Activated T-helper 1 cell treated with anti-CD3 and anti-CD28 coated beads, Interleukin-12 subunit alpha, Interleukin-12 subunit beta, Interleukin-2, Interleukin-4 antibody, amounts not matched to agents 30 ng/mL and 10 ng/mL and 1 ng/mL, durations not matched to agents 14 hours and 24 hours and 36 hours (primary cell): ENCODE measurements at regions of chr2 and their contacts with region 1.

Region 1: DNA sequence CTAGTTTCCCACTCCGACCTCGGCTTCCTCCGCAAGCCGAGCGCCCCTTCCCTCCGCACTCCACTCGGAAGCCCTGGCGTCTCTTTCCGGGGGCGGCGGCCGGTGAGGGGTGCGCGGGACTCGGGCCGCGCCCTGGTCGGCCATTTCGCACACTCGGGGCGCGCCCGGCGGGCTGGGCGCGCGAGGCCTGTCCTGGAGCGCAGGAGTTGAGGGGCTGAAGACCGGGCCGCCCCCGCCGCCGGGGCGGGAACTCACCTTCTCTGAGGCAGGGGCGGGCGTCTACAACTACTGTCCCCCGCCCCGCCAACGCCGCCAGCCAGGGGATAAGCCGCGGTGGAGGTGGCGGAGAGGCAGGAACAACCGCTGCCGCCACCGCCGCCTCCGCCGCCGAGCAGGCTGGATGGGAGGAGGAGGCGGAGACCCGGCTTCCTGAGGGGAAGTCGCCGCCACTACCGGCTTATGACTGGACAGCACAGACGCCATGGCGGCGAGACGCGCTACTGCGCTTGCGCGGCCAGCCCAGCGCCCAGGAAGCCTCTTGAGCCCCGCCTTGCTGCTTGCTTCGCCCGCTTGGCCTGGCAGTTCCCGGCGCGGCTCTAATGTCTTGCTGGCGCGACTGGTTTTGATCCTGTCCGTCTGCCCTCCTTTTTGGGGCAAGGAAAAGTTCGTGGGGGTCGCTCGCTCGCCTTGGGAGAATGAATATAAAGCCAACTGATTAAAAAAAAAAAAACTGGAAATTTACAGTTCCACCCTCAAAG is at the start of gene KRCC1:
- DNase-seq: peak; percentile 95
- H3K4me3 Mint-ChIP-seq: peak within 1 kb of the TSS; percentile 93
- H3K27ac Mint-ChIP-seq: peak within 1 kb of the TSS; percentile 98
- H3K4me1 Mint-ChIP-seq: peaks cover 62% of the 10 kb centered on the region
- H3K27me3 Mint-ChIP-seq: no peaks in the 10 kb centered on the region
- total RNA-seq, gene KRCC1: 16.9 and 17.9 TPM in 2 replicates

Region 2: DNA sequence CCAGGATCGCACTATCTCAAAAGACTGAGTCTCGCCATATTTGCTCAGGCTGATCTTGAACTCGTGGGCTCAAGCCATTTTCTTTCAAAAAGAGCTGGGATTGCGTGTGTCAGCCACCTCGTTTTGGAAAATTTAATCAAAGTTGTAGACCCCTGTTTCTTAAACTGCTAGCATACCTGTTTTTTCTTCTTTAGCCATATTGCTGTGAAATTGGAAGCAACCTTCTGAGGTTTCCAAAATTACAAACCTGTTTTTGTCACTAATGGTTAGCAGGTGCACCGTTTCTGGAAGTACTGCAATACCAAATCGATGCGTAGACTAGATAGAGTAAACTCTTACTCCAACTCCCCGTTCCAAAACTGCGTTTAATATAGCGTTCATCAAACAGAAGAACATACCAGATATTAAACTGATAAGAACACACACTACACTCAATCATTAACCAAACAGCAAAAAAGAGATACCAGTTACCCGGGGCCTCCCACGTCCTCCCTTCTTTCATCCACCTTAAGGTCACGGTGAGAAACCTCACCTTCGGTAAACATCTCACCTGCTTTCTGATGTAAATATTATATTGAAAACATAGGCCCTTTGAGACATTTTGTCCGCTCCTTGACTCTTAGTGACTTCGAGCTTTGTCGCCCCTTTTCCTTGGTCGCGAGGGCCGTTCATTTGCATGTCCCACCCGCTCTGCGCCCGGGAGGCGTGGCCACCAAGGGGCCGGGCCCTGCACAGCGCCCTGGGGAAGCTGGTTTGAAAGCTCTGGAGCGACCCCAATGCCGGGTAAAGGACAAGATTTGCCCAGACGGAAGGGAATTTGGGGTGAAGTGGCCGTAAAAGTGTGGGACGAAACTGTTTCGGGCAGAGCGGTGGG is 39.2 kb before region 1 on chr2 and contains the start of gene RNU2-63P:
- intact Hi-C with region 1: loop called (anchors 1 kb)
- DNase-seq: peak; percentile 65
- H3K4me3 Mint-ChIP-seq: peak within 1 kb of the TSS; percentile 92
- H3K27ac Mint-ChIP-seq: peak within 1 kb of the TSS; percentile 99
- H3K4me1 Mint-ChIP-seq: peaks cover 21% of the 10 kb centered on the region
- H3K27me3 Mint-ChIP-seq: peaks cover 5% of the 10 kb centered on the region
- total RNA-seq, gene RNU2-63P: 28.5 and 32.9 TPM in 2 replicates

Region 3: DNA sequence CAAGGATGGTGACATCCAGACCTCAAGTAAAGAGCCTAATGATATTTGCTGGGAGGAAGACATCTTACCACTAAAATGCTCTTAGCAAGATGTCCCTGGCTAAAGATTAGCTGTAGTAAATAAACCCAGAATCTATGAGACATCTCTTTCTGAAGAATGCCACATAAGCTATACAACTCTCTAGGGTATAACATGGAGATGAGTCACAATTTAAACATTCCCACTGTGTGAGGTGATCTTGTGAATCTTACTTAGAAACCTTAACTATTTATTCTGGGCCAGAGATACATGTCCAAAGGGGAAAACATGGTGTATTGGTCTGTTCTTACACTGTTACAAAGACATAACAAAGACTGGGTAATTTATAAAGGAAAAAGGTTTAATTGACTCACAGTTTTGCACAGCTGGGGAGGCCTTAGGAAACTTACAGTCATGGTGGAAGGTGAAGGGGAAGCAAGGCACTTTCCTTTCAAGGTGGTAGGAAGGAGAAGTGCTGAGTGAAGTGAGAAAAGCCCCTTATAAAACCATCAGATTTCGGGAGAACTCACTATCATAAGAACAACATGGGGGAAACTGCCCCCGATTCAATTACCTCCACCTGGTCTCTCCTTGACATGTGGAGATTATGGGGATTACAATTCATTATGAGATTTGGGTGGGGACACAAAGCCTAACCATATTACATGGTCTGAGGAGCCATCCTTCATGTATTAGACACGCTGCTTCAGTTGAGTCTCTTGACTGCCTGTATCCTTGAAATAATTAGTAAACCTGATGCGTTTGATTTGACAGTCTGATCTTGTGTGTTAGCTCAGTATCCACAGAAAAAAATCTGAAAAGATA is 17.1 kb before region 1 on chr2:
- intact Hi-C with region 1: loop called (anchors 2 kb)
- DNase-seq: no peak
- H3K4me3 Mint-ChIP-seq: no peak overlapping the region
- H3K27ac Mint-ChIP-seq: peak overlapping the region; percentile 36
- H3K4me1 Mint-ChIP-seq: peaks cover 25% of the 10 kb centered on the region
- H3K27me3 Mint-ChIP-seq: no peaks in the 10 kb centered on the region

Region 4: DNA sequence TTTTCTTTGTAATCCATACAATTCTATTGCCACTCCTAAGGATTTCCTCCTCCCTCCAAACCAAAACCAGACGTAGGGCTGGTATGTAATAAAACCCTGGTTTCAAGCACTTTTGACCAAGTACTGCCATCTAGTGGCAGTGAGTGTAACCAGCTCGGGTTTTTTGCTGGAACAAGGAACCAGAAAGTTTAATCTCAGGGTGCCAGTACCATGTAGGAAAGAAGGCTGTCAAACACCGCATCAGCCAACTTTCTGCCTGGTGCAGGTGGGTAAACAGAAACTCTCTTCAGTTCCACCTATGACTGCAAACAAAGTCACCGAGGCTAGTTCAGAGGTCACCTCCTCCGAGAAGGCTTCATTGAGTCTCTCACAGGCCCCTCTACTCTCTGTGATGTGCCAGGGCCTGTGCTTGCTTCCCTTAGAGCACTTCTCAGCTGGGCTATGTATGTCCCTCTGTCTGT is 104.4 kb after region 1 on chr2:
- intact Hi-C with region 1: loop called (anchors 1 kb)
- DNase-seq: peak; percentile 33
- H3K4me3 Mint-ChIP-seq: no peak overlapping the region
- H3K27ac Mint-ChIP-seq: no peak overlapping the region
- H3K4me1 Mint-ChIP-seq: no peaks in the 10 kb centered on the region
- H3K27me3 Mint-ChIP-seq: peaks cover 3% of the 10 kb centered on the region

Region 5: GRCh38 chr2:88187038-88187676 is 131.6 kb after region 1 on chr2:
- intact Hi-C with region 1: loop called (anchors 1 kb)
- DNase-seq: no peak
- H3K4me3 Mint-ChIP-seq: no peak overlapping the region
- H3K27ac Mint-ChIP-seq: no peak overlapping the region
- H3K4me1 Mint-ChIP-seq: peaks cover 16% of the 10 kb centered on the region
- H3K27me3 Mint-ChIP-seq: peaks cover 14% of the 10 kb centered on the region

Region 6: DNA sequence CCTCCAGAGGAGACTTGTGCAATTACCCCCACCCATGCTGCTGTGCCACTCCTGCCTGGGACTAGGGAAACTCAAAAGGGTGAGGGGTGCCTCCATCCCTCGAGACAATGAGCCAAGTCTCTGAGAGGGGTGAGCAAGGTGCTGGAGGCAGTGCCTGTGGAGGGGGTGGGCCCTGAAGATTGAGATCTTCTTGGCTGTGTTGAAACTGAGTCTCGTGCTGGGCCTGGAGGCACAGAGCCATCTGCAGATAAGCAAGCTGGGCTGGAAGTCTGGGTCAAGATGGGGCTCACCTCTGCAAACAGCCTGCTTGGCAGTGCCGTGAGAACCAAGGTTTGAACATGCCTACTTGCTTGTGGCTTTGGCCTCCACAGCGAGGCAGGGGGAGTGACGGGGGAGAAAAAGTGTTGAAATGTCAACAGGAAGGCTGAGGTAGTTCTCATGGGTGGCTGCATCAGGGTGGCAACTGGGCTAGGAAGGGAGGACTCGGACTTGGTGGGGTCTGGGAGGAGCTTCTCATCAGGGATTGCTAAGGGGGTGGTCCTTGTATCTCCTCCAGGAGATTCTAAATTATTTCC is 214.2 kb after region 1 on chr2:
- intact Hi-C with region 1: no loop called
- DNase-seq: no peak
- H3K4me3 Mint-ChIP-seq: no peak overlapping the region
- H3K27ac Mint-ChIP-seq: no peak overlapping the region
- H3K4me1 Mint-ChIP-seq: peaks cover 8% of the 10 kb centered on the region
- H3K27me3 Mint-ChIP-seq: peaks cover 6% of the 10 kb centered on the region

Region 7: DNA sequence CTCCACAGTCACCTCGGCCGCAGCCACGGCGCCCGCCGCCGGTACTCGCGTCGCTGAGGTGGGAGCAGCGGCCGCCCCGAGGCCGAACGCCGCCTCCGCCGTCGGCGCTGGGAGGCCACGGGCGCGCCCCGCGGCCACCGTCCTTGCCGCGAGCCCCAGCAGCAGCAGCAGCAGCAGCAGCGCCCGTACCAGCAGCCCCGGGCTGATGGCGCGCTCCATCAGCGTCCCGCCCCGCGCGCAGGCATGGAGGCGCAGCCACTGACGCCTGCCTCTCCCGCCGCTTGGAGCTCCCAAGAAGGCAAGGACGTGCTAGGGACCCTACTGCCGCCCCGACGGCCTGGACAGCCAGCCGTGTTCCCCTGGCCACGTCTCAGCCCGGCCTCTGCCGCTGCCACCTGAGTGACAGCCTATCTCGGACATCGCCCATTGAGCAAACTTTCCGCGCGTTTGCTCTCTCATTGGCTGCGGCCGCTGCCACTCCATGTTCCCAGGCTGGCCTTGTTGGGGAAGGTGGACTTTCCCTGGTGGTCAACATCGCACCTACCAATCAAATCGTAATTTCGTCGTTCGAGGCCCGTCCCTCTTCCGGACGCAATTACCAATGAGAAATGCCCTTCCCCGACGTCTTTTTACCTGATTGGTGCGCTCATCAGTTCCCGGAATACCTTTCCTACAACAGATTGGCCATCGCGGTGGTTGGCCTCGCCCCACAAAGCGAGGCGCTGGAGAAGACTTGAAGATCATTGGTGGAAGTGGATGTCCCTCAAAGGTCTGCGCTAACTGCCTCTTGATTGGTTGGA is 571.7 kb after region 1 on chr2 and contains the start of gene EIF2AK3:
- intact Hi-C with region 1: loop called (anchors 10 kb)
- DNase-seq: peak; percentile 96
- H3K4me3 Mint-ChIP-seq: peak within 1 kb of the TSS; percentile 94
- H3K27ac Mint-ChIP-seq: peak within 1 kb of the TSS; percentile 88
- H3K4me1 Mint-ChIP-seq: peaks cover 5% of the 10 kb centered on the region
- H3K27me3 Mint-ChIP-seq: no peaks in the 10 kb centered on the region
- total RNA-seq, gene EIF2AK3: 28.7 and 29.6 TPM in 2 replicates